ENCODE measurements at regions of chr6 and their contacts with region 1.

Region 1: DNA sequence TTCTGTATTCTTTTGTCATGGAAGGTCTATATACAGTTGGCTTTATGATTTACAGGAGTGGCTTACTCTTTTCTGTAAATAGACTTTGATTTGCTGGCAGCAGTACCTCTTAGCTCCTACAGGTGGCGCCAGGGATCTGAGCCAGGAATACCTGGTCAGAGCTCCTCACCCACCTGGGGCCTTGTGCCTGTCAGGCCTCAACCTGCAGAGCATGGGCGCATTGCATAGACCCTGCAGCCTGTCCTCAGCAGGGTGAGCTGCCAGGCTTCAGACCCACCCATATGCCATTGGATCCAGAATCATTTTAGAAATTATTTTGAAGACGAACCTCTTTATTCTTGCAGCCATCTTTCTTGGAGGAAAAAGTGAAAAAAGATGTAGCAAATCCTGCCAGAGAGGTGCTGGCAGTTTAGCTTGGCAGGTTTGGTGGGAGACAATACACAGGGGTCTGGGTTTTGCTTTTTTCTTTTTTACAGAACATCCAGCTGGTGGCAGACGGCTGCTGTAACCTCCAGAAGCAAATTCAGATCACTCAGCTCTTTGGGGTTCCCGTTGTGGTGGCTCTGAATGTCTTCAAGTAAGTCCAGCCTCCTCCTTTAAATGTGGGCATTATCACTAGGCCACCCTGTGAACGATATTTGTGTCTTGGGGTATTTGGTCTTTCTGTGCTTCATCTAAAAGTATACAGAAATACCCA is 149.1 kb downstream of the MTHFD1L start:
- DNase-seq: peak; percentile 62
- CTCF ChIP-seq: peak; percentile 87

Region 2: GRCh38 chr6:150891888-150892485 is 122.6 kb before region 1 on chr6:
- CTCF ChIA-PET with region 1: interaction called, 27 read pairs
- POLR2A ChIA-PET with region 1: no interaction called
- DNase-seq: peak; percentile 45
- CTCF ChIP-seq: peak; percentile 82

Region 3: GRCh38 chr6:150992719-150993118 is 21.8 kb before region 1 on chr6:
- CTCF ChIA-PET with region 1: interaction called, 47 read pairs
- POLR2A ChIA-PET with region 1: no interaction called
- DNase-seq: no peak
- CTCF ChIP-seq: no peak

Region 4: GRCh38 chr6:151029970-151030369 is 15.4 kb after region 1 on chr6:
- CTCF ChIA-PET with region 1: interaction called, 82 read pairs
- POLR2A ChIA-PET with region 1: no interaction called
- DNase-seq: no peak
- CTCF ChIP-seq: no peak

Region 5: DNA sequence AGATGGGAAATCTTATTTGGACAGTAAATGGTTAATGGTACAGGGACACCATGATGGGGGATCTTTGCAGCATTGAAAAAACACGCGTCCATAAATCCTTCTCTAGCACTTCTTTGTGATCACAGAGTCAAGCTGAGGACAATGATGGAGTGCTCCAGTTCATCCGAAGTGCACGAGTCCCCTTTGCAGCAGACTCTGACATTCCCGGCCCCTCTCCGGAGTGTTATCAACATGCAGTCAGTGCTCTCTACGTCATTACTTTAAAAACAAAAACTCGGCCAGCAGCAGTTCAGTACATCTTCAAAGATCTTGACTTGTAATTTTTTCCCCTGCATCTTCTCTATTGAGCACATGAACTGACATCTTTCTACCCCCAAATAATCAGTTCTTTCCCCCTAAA is 39.8 kb after region 1 on chr6:
- CTCF ChIA-PET with region 1: interaction called, 12 read pairs
- POLR2A ChIA-PET with region 1: no interaction called
- DNase-seq: no peak
- CTCF ChIP-seq: no peak

Region 6: GRCh38 chr6:151340219-151340978 is 325.8 kb after region 1 on chr6:
- CTCF ChIA-PET with region 1: interaction called, 35 read pairs
- POLR2A ChIA-PET with region 1: no interaction called
- DNase-seq: no peak
- CTCF ChIP-seq: no peak

Measured in GM10248 (cell line).